ENCODE measurements at regions of chr15 and their contacts with region 1.

Region 1: DNA sequence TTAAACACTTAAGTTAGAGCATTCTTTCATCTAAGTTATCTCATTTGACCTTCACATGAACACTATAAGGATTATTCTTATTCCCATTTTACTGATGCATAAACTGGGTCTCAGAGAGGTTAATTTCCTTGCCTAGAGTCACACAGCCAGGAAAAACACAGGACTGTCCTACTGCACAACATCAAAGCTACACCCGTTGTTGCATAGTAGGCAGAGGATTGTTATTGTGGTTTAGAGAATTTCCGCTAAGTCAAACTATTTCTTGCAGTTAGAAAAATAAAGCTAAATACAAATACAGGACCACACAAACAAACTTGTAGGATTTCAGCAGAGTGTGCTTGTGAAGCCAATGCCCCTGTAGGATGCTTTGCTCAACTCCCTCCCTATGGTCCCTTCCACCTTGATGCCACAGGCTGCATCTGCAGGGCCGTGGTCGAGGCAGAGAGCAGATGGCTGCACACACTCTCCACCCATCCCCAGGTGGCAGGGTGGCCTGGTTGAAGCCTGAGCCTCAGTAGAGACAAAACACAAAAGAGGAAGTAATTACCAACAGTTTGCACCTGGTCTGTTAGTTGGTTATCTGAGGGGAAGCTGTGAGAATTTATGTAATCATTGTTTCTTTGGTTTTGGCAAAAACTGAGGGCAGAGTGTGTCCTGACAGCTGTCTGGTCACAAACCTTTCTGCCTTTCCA is 41.1 kb upstream of the SKOR1 start:
- DNase-seq: peak; percentile 90
- ATAC-seq: peak; percentile 86
- H3K4me3 ChIP-seq: peak overlapping the region in 1 of 5 experiments; percentile 11
- H3K4me3 Mint-ChIP-seq: peak overlapping the region; percentile 66
- H3K27ac ChIP-seq: peak overlapping the region; percentile 75 to 85
- H3K27ac Mint-ChIP-seq: peak overlapping the region; percentile 91
- H3K4me1 ChIP-seq: peaks cover 44 to 50% of the 10 kb centered on the region in 2 donors
- H3K4me1 Mint-ChIP-seq: peaks cover 59% of the 10 kb centered on the region
- H3K27me3 ChIP-seq: no peaks in the 10 kb centered on the region
- H3K27me3 Mint-ChIP-seq: no peaks in the 10 kb centered on the region
- CTCF ChIP-seq: no peak

Region 2: DNA sequence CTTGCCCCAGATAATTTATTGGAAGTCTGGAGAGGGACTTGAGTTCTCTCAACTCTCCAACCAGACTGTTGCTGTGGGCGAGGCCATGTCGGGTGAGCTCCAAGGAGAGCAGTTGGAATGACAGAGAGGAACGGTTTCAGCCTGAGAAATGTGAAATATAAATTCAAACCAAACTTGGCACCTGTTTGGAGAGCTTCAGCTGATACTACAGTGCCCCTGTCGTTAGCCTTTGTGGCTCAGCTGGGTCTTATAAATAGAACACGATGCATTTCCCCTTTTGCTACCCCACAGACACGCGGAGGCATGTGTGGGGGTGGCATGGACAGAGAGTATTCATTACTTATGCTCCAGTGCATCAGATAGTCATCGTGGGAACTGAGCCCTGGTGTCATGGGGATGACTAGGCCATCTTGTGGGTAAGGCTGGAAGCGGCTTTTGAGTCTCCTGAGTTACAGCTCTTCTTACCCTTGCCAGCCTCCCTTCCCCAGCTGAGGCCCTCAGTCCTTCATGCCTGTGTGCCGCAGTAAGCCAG is 703.3 kb before region 1 on chr15:
- CTCF ChIA-PET with region 1: no interaction called
- POLR2A ChIA-PET with region 1: no interaction called
- intact Hi-C with region 1: loop called (anchors 10 kb)
- DNase-seq: peak; percentile 96
- ATAC-seq: peak; percentile 71
- H3K4me3 ChIP-seq: peak overlapping the region in 4 of 5 experiments; percentile 18 to 63 (median 30)
- H3K4me3 Mint-ChIP-seq: peak overlapping the region; percentile 87
- H3K27ac ChIP-seq: peak overlapping the region; percentile 92 to 97
- H3K27ac Mint-ChIP-seq: peak overlapping the region; percentile 97
- H3K4me1 ChIP-seq: peaks cover 96 to 100% of the 10 kb centered on the region in 2 donors
- H3K4me1 Mint-ChIP-seq: peaks cover 97% of the 10 kb centered on the region
- H3K27me3 ChIP-seq: no peaks in the 10 kb centered on the region
- H3K27me3 Mint-ChIP-seq: no peaks in the 10 kb centered on the region
- CTCF ChIP-seq: peak; percentile 61

Region 3: DNA sequence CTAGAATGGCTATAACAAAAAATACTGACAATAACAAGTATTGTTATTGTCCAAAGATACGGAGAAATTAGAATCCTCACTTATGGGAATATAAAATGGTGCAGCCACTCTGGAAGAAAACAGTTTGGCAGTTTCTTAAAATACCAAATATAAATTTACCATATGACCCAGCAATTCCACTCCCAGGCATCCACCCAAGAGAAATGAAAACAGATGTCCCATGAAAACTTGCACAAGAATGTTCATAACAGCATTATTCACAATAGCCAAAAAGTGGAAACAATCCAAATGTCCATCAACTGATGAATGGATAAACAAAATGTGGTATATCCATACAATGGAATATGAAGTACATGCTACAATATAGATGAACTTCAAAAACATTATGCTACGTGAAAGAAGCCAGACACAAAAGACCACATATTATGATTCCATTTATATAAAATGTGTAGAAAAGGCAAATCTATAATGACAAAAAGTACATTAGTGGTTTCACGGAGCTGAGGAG is 539.2 kb before region 1 on chr15:
- CTCF ChIA-PET with region 1: no interaction called
- POLR2A ChIA-PET with region 1: no interaction called
- intact Hi-C with region 1: no loop called
- DNase-seq: no peak
- ATAC-seq: no peak
- H3K4me3 ChIP-seq: no peak overlapping the region
- H3K4me3 Mint-ChIP-seq: no peak overlapping the region
- H3K27ac ChIP-seq: no peak overlapping the region
- H3K27ac Mint-ChIP-seq: no peak overlapping the region
- H3K4me1 ChIP-seq: peaks cover 23 to 25% of the 10 kb centered on the region in 2 donors
- H3K4me1 Mint-ChIP-seq: peaks cover 41% of the 10 kb centered on the region
- H3K27me3 ChIP-seq: no peaks in the 10 kb centered on the region
- H3K27me3 Mint-ChIP-seq: no peaks in the 10 kb centered on the region
- CTCF ChIP-seq: no peak

Region 4: DNA sequence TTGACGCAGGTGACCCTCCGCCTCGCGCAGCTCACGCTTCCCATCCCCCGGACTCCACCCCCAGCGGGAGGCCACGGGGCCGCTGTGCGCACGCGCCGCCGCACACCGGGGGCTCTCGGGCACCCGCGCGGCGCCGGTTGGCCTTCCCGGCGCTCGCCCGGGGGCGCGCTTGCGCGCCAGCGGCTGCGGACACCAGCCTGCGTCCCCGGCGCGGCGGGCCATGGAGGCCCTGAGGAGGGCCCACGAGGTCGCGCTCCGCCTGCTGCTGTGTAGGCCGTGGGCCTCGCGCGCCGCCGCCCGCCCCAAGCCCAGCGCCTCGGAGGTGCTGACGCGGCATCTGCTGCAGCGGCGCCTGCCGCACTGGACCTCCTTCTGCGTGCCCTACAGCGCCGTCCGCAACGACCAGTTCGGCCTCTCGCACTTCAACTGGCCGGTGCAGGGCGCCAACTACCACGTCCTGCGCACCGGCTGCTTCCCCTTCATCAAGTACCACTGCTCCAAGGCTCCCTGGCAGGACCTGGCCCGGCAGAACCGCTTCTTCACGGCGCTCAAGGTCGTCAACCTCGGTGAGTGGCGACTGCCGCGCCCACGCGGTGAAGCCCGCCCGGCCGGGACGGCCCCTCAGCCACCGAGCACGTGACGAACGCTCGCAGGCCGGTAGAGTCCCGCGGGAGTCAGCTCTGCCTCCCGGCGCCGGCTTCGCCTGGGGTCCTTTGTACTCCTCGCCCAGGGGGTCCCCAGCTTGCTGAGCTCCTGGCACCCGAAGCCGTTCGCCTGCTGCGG is 263.0 kb before region 1 on chr15 and contains the start of gene C15orf61:
- CTCF ChIA-PET with region 1: no interaction called
- POLR2A ChIA-PET with region 1: no interaction called
- intact Hi-C with region 1: loop called (anchors 1 kb)
- DNase-seq: peak; percentile 91
- ATAC-seq: peak; percentile 83
- H3K4me3 ChIP-seq: peak within 1 kb of the TSS; percentile 71 to 86 (median 83)
- H3K4me3 Mint-ChIP-seq: peak within 1 kb of the TSS; percentile 95
- H3K27ac ChIP-seq: peak within 1 kb of the TSS; percentile 80 to 97
- H3K27ac Mint-ChIP-seq: peak within 1 kb of the TSS; percentile 95
- H3K4me1 ChIP-seq: peaks cover 11 to 18% of the 10 kb centered on the region in 2 donors
- H3K4me1 Mint-ChIP-seq: peaks cover 23% of the 10 kb centered on the region
- H3K27me3 ChIP-seq: no peaks in the 10 kb centered on the region
- H3K27me3 Mint-ChIP-seq: no peaks in the 10 kb centered on the region
- CTCF ChIP-seq: no peak
- total RNA-seq, gene C15orf61: 5.2 and 6.1 TPM in 2 replicates

Region 5: DNA sequence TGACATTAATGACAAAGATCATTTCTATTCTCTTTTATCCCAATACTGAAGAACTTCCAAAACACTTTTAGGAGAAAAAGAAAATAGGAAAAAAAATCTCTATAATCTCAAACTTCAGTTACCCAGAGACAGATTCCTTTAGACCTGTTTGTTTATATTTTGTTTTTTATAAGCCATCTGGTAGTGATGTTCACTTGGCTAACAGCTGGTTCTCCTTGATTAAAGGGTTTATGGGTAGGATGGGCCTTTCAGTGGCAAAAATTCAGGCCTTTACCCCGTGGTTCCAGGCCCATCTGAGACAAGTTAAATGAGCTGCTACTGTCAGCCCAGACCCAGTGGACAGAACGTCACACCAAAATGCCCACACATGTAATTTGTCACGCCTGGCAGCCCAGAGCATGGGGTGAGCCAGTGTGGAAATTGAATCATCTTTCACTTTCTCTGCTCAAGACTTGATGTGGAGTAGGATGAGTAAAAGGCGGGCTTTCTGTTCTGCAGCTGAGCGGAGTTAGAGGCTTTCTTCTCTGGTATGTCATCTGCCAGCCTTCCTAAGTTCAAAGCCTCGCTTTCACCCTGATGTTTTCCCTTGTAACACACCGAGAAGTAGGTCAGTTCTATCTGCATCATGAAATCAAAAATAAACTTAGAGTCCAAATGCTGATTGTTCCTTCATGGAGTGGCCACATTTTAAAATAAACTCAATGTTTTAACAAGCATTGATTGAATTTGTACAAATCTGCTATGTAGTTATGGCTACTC is 21.4 kb before region 1 on chr15:
- CTCF ChIA-PET with region 1: interaction called, 12 read pairs
- POLR2A ChIA-PET with region 1: no interaction called
- intact Hi-C with region 1: no loop called
- DNase-seq: peak; percentile 36
- ATAC-seq: peak; percentile 83
- H3K4me3 ChIP-seq: peak overlapping the region in 1 of 5 experiments; percentile 16
- H3K4me3 Mint-ChIP-seq: peak overlapping the region; percentile 33
- H3K27ac ChIP-seq: no peak overlapping the region
- H3K27ac Mint-ChIP-seq: peak overlapping the region; percentile 28
- H3K4me1 ChIP-seq: peaks cover 45 to 49% of the 10 kb centered on the region in 2 donors
- H3K4me1 Mint-ChIP-seq: peaks cover 65% of the 10 kb centered on the region
- H3K27me3 ChIP-seq: no peaks in the 10 kb centered on the region
- H3K27me3 Mint-ChIP-seq: no peaks in the 10 kb centered on the region
- CTCF ChIP-seq: no peak

Region 6: DNA sequence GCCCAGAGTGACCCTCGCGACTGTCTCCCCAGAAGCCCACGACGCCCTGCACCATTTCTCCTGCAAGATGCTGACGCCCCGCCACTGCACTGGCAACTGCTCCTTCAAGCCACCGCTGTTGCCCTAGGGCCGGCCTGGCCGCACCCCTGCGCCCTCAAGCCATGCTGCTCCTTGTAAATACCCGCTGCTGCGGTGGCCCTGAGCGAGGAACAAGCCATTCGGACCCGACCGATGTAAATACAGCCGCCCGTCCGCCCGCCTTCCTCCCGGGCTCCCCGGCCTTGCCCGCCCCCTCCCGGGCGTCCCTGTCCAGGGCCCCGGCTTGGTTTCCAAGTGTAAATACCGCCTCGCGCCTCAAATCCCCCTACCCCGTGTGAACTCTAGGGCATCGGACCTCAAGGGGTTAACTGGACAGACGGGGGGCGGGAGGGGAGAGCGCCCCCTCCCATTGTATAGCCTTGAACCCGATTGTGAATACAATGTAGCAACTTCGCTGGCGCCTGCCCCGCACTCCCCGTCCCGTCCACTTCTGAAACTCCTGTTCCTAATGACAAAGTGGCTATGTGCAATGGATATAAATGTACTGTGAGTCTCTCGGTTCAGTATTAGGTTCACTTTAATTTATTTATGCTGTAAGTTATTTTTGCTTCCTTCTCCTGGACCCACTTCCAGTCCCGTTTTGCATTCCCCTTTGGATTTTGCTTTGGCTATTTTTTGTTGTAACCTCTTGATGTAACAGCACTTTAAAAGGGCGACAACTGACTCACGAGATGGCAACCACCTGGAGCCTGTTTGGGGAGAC is 49.7 kb after region 1 on chr15:
- CTCF ChIA-PET with region 1: interaction called, 237 read pairs
- POLR2A ChIA-PET with region 1: interaction called, 22 read pairs
- intact Hi-C with region 1: loop called (anchors 1 kb)
- DNase-seq: peak; percentile 69
- ATAC-seq: peak; percentile 48
- H3K4me3 ChIP-seq: peak overlapping the region in 3 of 5 experiments; percentile 48 to 74 (median 58)
- H3K4me3 Mint-ChIP-seq: peak overlapping the region; percentile 88
- H3K27ac ChIP-seq: no peak overlapping the region
- H3K27ac Mint-ChIP-seq: peak overlapping the region; percentile 50
- H3K4me1 ChIP-seq: peaks cover 61 to 64% of the 10 kb centered on the region in 2 donors
- H3K4me1 Mint-ChIP-seq: peaks cover 65% of the 10 kb centered on the region
- H3K27me3 ChIP-seq: peaks cover 4 to 89% (median 60%) of the 10 kb centered on the region in 4 experiments
- H3K27me3 Mint-ChIP-seq: peaks cover 60% of the 10 kb centered on the region
- CTCF ChIP-seq: peak; percentile 40

Region 7: GRCh38 chr15:67869701-67870100 is 85.5 kb after region 1 on chr15:
- CTCF ChIA-PET with region 1: no interaction called
- POLR2A ChIA-PET with region 1: no interaction called
- intact Hi-C with region 1: no loop called
- DNase-seq: no peak
- ATAC-seq: no peak
- H3K4me3 ChIP-seq: no peak overlapping the region
- H3K4me3 Mint-ChIP-seq: no peak overlapping the region
- H3K27ac ChIP-seq: no peak overlapping the region
- H3K27ac Mint-ChIP-seq: no peak overlapping the region
- H3K4me1 ChIP-seq: no peaks in the 10 kb centered on the region
- H3K4me1 Mint-ChIP-seq: no peaks in the 10 kb centered on the region
- H3K27me3 ChIP-seq: peaks cover 0 to 6% (median 4%) of the 10 kb centered on the region in 4 experiments
- H3K27me3 Mint-ChIP-seq: peaks cover 29% of the 10 kb centered on the region
- CTCF ChIP-seq: no peak

Region 8: GRCh38 chr15:68053701-68054627 is 269.7 kb after region 1 on chr15 and contains the start of gene PIAS1:
- CTCF ChIA-PET with region 1: interaction called, 3 read pairs
- POLR2A ChIA-PET with region 1: no interaction called
- intact Hi-C with region 1: loop called (anchors 2 kb)
- DNase-seq: peak; percentile 95
- ATAC-seq: peak; percentile 92
- H3K4me3 ChIP-seq: peak within 1 kb of the TSS; percentile 77 to 99 (median 88)
- H3K4me3 Mint-ChIP-seq: peak within 1 kb of the TSS; percentile 93
- H3K27ac ChIP-seq: peak within 1 kb of the TSS; percentile 78 to 92
- H3K27ac Mint-ChIP-seq: peak within 1 kb of the TSS; percentile 96
- H3K4me1 ChIP-seq: peaks cover 11 to 26% of the 10 kb centered on the region in 2 donors
- H3K4me1 Mint-ChIP-seq: peaks cover 40% of the 10 kb centered on the region
- H3K27me3 ChIP-seq: no peaks in the 10 kb centered on the region
- H3K27me3 Mint-ChIP-seq: no peaks in the 10 kb centered on the region
- CTCF ChIP-seq: no peak
- total RNA-seq, gene PIAS1: 87.3 and 97.5 TPM in 2 replicates

Measured in B cell (primary cell).